ENCODE measurements at regions of chr3 and their contacts with region 1.

Region 1: DNA sequence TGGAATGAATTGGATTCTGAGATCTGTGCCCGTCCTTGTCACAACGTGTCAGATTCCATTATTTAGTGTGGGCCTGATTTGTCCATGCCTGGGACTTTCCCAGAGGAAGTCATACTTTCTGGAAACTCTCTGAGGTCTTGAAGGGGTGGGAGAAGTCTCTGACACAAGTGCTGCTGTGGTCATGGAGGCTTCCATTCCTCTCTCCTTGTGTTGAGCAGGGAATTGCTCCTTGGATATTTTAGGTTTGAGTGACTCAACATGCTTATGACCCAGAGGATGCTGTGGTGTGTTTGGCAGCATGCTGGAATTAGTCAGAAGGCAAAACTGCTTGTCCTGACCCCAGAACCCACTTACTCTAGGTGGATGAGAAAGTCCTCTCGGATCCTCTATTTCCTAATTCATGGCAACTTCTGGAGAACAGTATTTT is 132.1 kb downstream of the LPP start:
- DNase-seq: peak; percentile 32
- H3K4me3 Mint-ChIP-seq: no peak overlapping the region
- H3K27ac Mint-ChIP-seq: no peak overlapping the region
- H3K4me1 Mint-ChIP-seq: peaks cover 45% of the 10 kb centered on the region
- H3K27me3 Mint-ChIP-seq: no peaks in the 10 kb centered on the region

Region 2: DNA sequence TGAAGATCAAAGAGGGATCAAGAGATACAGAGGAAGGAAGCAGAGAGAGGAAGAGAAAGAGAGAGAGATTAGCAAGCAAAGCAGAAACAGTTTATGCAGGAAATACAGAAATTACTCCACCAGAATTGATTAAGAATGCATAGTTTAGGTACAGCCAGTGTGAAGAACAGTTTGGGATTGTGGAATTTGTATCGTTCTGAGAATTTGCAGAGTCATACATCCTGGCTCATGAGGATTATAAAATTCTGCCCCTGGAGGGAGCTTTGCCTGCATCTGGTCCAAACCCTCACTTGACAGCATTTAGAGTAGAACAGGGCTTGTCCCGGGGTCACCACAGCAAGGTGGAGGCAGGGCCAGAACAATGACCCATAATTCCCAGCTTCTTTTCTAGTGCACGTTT is 1038.7 kb before region 1 on chr3:
- CTCF ChIA-PET with region 1: no interaction called
- intact Hi-C with region 1: no loop called
- DNase-seq: no peak
- H3K4me3 Mint-ChIP-seq: no peak overlapping the region
- H3K27ac Mint-ChIP-seq: no peak overlapping the region
- H3K4me1 Mint-ChIP-seq: peaks cover 10% of the 10 kb centered on the region
- H3K27me3 Mint-ChIP-seq: no peaks in the 10 kb centered on the region

Region 3: GRCh38 chr3:187777331-187777941 is 508.7 kb before region 1 on chr3:
- CTCF ChIA-PET with region 1: no interaction called
- intact Hi-C with region 1: loop called (anchors 1 kb)
- DNase-seq: peak; percentile 76
- H3K4me3 Mint-ChIP-seq: peak overlapping the region; percentile 48
- H3K27ac Mint-ChIP-seq: peak overlapping the region; percentile 96
- H3K4me1 Mint-ChIP-seq: peaks cover 31% of the 10 kb centered on the region
- H3K27me3 Mint-ChIP-seq: no peaks in the 10 kb centered on the region

Region 4: DNA sequence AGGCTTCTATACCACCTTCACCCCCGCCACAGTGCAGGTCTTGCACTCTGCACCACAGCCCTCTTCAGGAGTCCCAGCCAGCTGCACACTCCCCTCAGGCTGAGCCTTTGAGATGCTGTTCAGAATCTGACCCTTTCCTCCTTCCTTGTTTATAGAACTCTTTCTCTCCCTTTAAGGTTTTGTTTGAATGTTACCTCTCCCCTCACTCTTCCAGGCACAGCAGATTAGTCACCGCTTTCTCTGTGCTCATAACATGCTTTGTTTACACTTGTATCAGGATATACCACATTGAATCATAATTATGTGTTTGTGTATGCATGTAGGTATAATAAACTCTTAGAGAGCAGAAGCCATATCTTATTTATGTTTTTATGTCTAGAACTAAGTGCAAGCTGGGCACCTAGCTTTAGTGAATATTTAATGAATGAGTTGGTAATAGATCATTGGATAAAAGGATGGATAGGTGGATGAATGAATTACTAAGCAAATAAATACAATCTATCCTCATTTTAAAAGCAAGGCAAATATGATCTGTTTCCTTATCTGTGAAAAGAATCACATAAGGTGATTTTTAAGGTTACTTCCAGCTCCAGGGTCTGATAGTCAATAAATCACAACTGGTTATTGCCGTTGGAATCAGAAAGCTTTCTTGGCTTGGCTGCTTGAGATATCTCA is 372.3 kb before region 1 on chr3:
- CTCF ChIA-PET with region 1: no interaction called
- intact Hi-C with region 1: no loop called
- DNase-seq: no peak
- H3K4me3 Mint-ChIP-seq: no peak overlapping the region
- H3K27ac Mint-ChIP-seq: no peak overlapping the region
- H3K4me1 Mint-ChIP-seq: peaks cover 40% of the 10 kb centered on the region
- H3K27me3 Mint-ChIP-seq: no peaks in the 10 kb centered on the region

Region 5: GRCh38 chr3:188133219-188133618 is 152.9 kb before region 1 on chr3:
- CTCF ChIA-PET with region 1: no interaction called
- intact Hi-C with region 1: no loop called
- DNase-seq: no peak
- H3K4me3 Mint-ChIP-seq: no peak overlapping the region
- H3K27ac Mint-ChIP-seq: no peak overlapping the region
- H3K4me1 Mint-ChIP-seq: peaks cover 11% of the 10 kb centered on the region
- H3K27me3 Mint-ChIP-seq: no peaks in the 10 kb centered on the region

Region 6: DNA sequence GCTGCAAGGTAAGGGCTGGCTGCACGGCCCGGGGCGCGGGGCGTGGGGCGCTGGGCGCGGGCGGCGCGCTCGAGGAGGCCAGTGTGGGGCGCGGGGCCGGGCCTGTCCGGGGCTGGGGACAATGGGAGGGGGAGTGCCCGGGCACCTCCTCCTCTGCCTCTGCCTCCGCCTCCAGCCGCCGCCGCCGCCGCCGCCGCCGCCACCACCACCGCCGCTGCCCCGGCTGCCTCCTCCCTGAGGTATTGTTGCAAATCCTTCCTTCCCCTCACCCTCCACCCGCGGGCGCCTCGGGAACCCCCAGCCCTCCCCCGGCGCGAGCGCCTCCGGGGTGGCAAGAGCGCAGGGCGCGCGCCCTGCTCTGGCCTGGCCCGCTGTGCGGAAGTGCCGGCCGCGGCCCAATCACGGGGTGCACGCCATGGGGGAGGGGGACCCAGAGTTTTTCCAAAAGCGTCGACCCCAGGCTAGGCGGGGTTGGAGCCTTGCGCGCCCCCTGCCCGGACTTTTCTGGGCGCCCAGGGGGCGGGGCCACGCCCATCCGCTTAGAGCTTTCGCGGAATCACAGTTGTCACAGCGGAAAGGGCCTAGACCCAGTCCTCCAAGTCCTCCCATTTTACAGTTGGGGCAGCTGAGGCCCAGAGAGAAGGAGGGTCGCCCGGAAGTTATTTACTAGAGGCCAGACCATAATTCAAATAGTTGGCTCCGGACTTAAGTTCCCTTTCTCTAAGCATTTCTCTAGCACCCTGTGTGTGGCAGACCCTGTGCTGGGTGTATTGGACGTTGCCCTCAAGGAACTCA is 131.9 kb before region 1 on chr3 and contains the start of gene LPP:
- CTCF ChIA-PET with region 1: interaction called, 3 read pairs
- intact Hi-C with region 1: loop called (anchors 1 kb)
- DNase-seq: peak; percentile 88
- H3K4me3 Mint-ChIP-seq: peak within 1 kb of the TSS; percentile 83
- H3K27ac Mint-ChIP-seq: peak within 1 kb of the TSS; percentile 89
- H3K4me1 Mint-ChIP-seq: peaks cover 54% of the 10 kb centered on the region
- H3K27me3 Mint-ChIP-seq: no peaks in the 10 kb centered on the region
- total RNA-seq, gene LPP: 27.5 to 31.8 TPM

Region 7: GRCh38 chr3:188309437-188310269 is 23.6 kb after region 1 on chr3:
- CTCF ChIA-PET with region 1: interaction called, 4 read pairs
- intact Hi-C with region 1: loop called (anchors 1 kb)
- DNase-seq: no peak
- H3K4me3 Mint-ChIP-seq: no peak overlapping the region
- H3K27ac Mint-ChIP-seq: peak overlapping the region; percentile 22
- H3K4me1 Mint-ChIP-seq: peaks cover 25% of the 10 kb centered on the region
- H3K27me3 Mint-ChIP-seq: no peaks in the 10 kb centered on the region

Region 8: GRCh38 chr3:188400494-188401243 is 114.6 kb after region 1 on chr3:
- CTCF ChIA-PET with region 1: no interaction called
- intact Hi-C with region 1: loop called (anchors 2 kb)
- DNase-seq: peak; percentile 60
- H3K4me3 Mint-ChIP-seq: no peak overlapping the region
- H3K27ac Mint-ChIP-seq: peak overlapping the region; percentile 43
- H3K4me1 Mint-ChIP-seq: peaks cover 70% of the 10 kb centered on the region
- H3K27me3 Mint-ChIP-seq: no peaks in the 10 kb centered on the region

Region 9: GRCh38 chr3:188595890-188596376 is 309.8 kb after region 1 on chr3:
- CTCF ChIA-PET with region 1: no interaction called
- intact Hi-C with region 1: no loop called
- DNase-seq: no peak
- H3K4me3 Mint-ChIP-seq: no peak overlapping the region
- H3K27ac Mint-ChIP-seq: no peak overlapping the region
- H3K4me1 Mint-ChIP-seq: peaks cover 6% of the 10 kb centered on the region
- H3K27me3 Mint-ChIP-seq: no peaks in the 10 kb centered on the region

Measured in activated naive CD4-positive, alpha-beta T cell treated with anti-CD3 and anti-CD28 coated beads for 36 hours (primary cell).